ENCODE measurements at regions of chr2 and their contacts with region 1.

Region 1: DNA sequence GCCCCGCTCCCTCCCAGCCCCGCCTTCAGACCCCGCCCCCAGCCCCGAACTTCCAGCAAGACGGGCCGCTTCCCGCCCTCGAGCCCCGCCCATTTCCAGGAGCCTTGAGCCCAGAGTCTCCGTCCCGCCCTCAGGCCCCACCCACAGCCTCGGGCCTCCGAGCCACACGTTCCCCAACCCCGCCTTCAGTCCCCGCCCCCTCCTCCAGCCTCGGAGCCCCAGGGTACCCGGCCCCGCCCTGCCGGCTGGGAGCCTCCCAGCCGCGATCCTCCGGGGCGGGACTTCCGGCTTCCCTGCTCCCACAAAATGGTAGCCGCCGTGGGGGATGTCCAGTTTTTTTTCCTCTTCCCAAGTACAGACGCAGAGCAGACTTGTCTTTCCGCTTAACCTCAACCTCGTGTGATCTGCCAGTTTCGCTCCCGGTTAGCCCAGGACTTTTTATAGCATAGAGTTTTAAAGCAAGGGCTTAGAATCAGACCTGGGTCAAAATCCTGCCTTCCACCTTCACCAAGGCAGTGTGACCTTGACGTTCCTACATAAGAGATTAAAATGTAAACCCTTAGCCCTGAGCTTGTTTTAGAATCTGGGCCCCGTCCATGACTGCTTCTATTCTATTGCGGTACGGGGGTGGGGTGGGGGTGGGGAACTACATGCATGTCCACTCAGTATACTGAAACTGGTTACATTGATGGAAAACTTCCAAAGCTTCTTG is 435 bp upstream of the GPR155 start:
- DNase-seq: peak; percentile 86
- ATAC-seq: peak; percentile 97
- H3K4me3 Mint-ChIP-seq: peak overlapping the region; percentile 96
- H3K27ac Mint-ChIP-seq: peak overlapping the region; percentile 93
- H3K4me1 Mint-ChIP-seq: peaks cover 41% of the 10 kb centered on the region
- H3K27me3 Mint-ChIP-seq: no peaks in the 10 kb centered on the region
- CTCF ChIP-seq: no peak

Region 2: DNA sequence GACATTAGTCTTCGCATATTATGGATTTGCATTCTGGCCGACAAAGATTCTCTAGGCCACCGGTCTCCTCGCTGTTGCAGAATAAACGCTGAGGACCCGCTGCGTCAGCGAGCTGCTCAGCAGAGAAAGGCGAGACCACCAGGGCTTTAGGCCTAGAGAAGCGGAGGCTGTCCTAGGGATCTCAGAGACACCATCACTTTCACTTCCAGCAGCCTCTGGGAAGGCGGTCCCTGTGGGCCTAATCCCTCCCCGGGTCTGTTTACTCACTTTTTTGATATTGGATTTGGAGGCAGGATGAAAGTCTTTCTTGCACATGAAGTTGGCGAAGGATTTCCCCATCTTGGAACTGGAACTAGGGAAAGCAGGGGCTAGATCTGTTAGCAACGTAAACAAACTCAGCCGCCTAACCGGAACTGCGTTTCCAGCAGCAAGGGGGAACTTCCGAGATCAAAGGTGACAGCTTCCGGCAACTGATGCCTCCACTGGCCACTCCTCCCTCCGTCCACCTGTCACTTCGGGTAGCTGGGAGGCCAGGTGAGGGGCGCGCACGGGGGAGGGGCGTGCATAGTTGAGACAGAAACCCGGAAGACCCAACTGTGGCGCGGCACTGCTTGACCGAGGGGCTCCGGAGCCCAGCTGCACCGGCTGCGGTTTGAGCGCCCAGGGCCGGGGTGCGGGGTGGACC is 91.8 kb before region 1 on chr2 and contains the start of gene SCRN3:
- CTCF ChIA-PET with region 1: no interaction called
- POLR2A ChIA-PET with region 1: no interaction called
- intact Hi-C with region 1: loop called (anchors 1 kb)
- DNase-seq: peak; percentile 59
- ATAC-seq: peak; percentile 94
- H3K4me3 Mint-ChIP-seq: peak within 1 kb of the TSS; percentile 100
- H3K27ac Mint-ChIP-seq: peak within 1 kb of the TSS; percentile 98
- H3K4me1 Mint-ChIP-seq: peaks cover 34% of the 10 kb centered on the region
- H3K27me3 Mint-ChIP-seq: no peaks in the 10 kb centered on the region
- CTCF ChIP-seq: no peak
- total RNA-seq, gene SCRN3: 14.3 and 19.4 TPM in 2 replicates

Region 3: GRCh38 chr2:174593574-174594203 is 106.4 kb after region 1 on chr2:
- CTCF ChIA-PET with region 1: no interaction called
- POLR2A ChIA-PET with region 1: interaction called, 13 read pairs
- intact Hi-C with region 1: no loop called
- DNase-seq: no peak
- ATAC-seq: peak; percentile 65
- H3K4me3 Mint-ChIP-seq: peak overlapping the region; percentile 98
- H3K27ac Mint-ChIP-seq: peak overlapping the region; percentile 99
- H3K4me1 Mint-ChIP-seq: peaks cover 78% of the 10 kb centered on the region
- H3K27me3 Mint-ChIP-seq: no peaks in the 10 kb centered on the region
- CTCF ChIP-seq: no peak

Region 4: GRCh38 chr2:174663550-174663949 is 176.3 kb after region 1 on chr2:
- CTCF ChIA-PET with region 1: no interaction called
- POLR2A ChIA-PET with region 1: no interaction called
- intact Hi-C with region 1: no loop called
- DNase-seq: no peak
- ATAC-seq: no peak
- H3K4me3 Mint-ChIP-seq: no peak overlapping the region
- H3K27ac Mint-ChIP-seq: no peak overlapping the region
- H3K4me1 Mint-ChIP-seq: peaks cover 25% of the 10 kb centered on the region
- H3K27me3 Mint-ChIP-seq: no peaks in the 10 kb centered on the region
- CTCF ChIP-seq: no peak

Region 5: GRCh38 chr2:174682578-174683391 is 195.5 kb after region 1 on chr2:
- CTCF ChIA-PET with region 1: interaction called, 3 read pairs
- POLR2A ChIA-PET with region 1: no interaction called
- intact Hi-C with region 1: loop called (anchors 2 kb)
- DNase-seq: peak; percentile 63
- ATAC-seq: peak; percentile 74
- H3K4me3 Mint-ChIP-seq: peak overlapping the region; percentile 90
- H3K27ac Mint-ChIP-seq: peak overlapping the region; percentile 83
- H3K4me1 Mint-ChIP-seq: peaks cover 16% of the 10 kb centered on the region
- H3K27me3 Mint-ChIP-seq: no peaks in the 10 kb centered on the region
- CTCF ChIP-seq: no peak

Region 6: DNA sequence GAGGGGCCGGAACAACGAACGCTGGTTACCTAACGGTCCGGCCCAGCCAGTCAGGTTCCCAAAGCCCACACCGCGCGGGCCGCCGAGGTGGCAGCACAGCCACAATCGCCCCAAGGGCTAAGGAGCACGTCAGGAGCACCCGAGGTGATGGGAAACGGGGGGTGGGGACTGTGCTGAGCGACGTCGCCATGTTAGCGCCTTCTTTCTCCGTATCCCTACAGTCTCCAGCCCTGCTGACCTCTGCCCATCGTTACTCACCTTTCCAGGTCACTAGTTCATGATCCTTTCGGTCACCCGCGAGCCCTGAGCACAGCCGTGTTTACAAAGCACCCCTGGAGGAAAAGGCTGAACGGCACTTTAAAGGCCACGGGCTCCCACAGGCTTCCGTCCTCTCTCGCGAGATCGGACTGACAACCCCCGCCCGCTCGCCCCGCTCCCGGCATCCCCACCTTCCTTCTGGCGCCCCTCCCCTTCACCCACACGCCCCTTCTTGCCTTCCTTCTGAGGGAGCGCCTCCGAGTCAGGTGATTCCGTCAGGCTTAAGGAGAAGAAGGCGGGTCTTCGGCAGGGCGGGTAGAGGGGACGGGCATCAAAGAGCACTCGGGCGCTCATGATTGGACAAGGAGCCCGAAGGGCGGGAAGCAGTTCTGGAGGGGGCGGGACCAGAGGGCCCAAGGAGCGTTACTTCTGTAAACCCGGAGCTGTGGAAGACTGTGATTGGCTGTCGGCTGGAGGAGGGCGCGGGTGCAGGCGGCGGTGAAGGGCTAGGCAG is 680.7 kb after region 1 on chr2 and contains the start of gene ATF2:
- CTCF ChIA-PET with region 1: no interaction called
- POLR2A ChIA-PET with region 1: no interaction called
- intact Hi-C with region 1: loop called (anchors 1 kb)
- DNase-seq: peak; percentile 87
- ATAC-seq: peak; percentile 92
- H3K4me3 Mint-ChIP-seq: peak within 1 kb of the TSS; percentile 100
- H3K27ac Mint-ChIP-seq: peak within 1 kb of the TSS; percentile 99
- H3K4me1 Mint-ChIP-seq: peaks cover 43% of the 10 kb centered on the region
- H3K27me3 Mint-ChIP-seq: no peaks in the 10 kb centered on the region
- CTCF ChIP-seq: no peak
- total RNA-seq, gene ATF2: 49.0 and 59.9 TPM in 2 replicates